ENCODE measurements at regions of chr7 and their contacts with region 1.

Region 1: DNA sequence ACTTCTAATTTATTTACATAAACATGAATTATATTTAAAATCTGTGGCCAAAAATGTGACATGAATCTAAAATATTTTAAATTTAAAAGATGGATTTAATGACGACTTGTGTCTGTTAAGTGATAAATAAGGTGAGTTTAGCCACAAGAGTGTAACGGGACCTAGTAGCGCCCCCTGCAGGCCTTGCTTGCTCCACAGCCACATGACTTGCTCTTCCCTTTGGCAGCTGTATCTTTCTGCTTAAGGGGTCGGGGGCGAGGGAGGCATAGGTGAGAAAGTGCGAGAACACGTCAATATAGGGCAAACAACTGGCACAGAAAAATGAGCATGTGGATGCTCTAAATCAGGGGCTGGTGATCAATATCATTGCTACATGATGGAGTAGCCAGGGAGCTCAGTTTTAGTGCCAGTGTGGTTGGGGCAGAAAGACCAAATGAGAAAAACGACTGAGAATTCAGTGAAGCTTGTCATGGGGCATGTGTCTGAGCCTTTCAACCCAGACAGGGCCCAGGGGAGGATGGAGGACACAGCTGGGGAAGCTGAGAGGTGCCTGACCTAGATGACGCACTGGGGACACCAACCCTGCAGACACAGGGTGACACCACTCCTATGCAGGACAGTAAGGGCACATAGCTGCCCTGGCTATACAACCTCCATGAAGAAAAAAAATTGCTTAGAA is 49.8 kb downstream of the PAXIP1 start:
- DNase-seq: peak; percentile 85
- H3K4me3 Mint-ChIP-seq: no peak overlapping the region
- H3K27ac Mint-ChIP-seq: no peak overlapping the region
- H3K4me1 Mint-ChIP-seq: peaks cover 3% of the 10 kb centered on the region
- H3K27me3 Mint-ChIP-seq: no peaks in the 10 kb centered on the region

Region 2: GRCh38 chr7:154913638-154914312 is 39.4 kb before region 1 on chr7:
- intact Hi-C with region 1: loop called (anchors 1 kb)
- DNase-seq: peak; percentile 96
- H3K4me3 Mint-ChIP-seq: peak overlapping the region; percentile 82
- H3K27ac Mint-ChIP-seq: peak overlapping the region; percentile 37
- H3K4me1 Mint-ChIP-seq: peaks cover 4% of the 10 kb centered on the region
- H3K27me3 Mint-ChIP-seq: peaks cover 9% of the 10 kb centered on the region

Region 3: GRCh38 chr7:154968336-154969001 is 15.3 kb after region 1 on chr7:
- intact Hi-C with region 1: loop called (anchors 1 kb)
- DNase-seq: no peak
- H3K4me3 Mint-ChIP-seq: no peak overlapping the region
- H3K27ac Mint-ChIP-seq: no peak overlapping the region
- H3K4me1 Mint-ChIP-seq: peaks cover 10% of the 10 kb centered on the region
- H3K27me3 Mint-ChIP-seq: no peaks in the 10 kb centered on the region

Measured in activated CD4-positive, alpha-beta T cell treated with anti-CD3 and anti-CD28 coated beads, Interleukin-2, amount 10 ng/mL, durations not matched to agents 24 days and 14 days (primary cell).